Activated T-helper 2 cell treated with anti-CD3 and anti-CD28 coated beads, Interferon-gamma antibody, Interleukin-2, Interleukin-4, amounts not matched to agents 10 μg/mL and 5 μg/mL and 100 μg/mL, durations not matched to agents 14 hours and 24 hours and 36 hours (primary cell): ENCODE measurements at regions of chr20 and their contacts with region 1.

Region 1: DNA sequence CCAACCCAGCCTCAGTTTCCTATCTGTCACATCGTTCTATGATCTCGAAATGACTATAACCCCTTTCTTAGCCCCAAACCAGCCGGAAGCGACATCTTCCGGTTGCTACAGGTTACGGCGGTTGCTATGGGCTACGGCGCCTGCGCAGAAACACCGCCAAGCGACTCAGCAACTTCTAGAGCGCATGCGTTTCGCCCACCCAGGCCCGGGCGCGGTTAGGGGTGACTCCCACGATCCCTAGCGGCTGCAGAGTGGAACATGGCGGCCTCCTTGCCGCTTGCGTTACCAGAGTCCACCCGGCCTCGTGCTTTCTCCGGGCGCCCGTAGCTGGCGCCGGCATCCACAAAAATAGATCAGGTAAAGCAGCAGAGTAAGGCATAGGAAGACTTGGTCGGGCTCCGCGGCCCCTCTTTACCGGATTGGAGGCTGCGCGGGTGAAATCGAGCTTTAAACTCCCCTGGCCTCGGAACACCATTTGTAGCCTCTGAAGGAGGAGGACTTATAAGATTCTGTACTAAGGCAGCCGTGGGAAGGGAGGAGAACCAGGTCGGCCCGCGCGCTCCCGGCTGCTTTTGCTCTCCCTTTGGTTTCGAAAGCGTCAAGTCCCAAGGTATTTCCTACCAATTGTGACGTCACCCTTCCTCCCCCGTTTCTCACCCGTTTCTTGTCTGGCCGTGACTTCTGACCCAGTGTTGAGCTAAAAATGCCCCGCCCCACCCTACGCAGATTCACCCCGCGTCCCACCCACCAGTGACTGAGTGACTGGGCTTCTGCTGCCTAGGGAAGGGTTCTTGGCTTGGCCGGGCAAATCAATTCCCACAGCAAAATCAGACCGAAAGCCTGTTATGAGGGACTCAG is 3.5 kb downstream of the SDCBP2 start:
- DNase-seq: peak; percentile 98
- H3K4me3 Mint-ChIP-seq: no peak overlapping the region
- H3K27ac Mint-ChIP-seq: no peak overlapping the region
- H3K4me1 Mint-ChIP-seq: peaks cover 31% of the 10 kb centered on the region
- H3K27me3 Mint-ChIP-seq: no peaks in the 10 kb centered on the region

Region 2: GRCh38 chr20:391041-391711 is 934.2 kb before region 1 on chr20:
- intact Hi-C with region 1: no loop called
- DNase-seq: no peak
- H3K4me3 Mint-ChIP-seq: no peak overlapping the region
- H3K27ac Mint-ChIP-seq: no peak overlapping the region
- H3K4me1 Mint-ChIP-seq: no peaks in the 10 kb centered on the region
- H3K27me3 Mint-ChIP-seq: no peaks in the 10 kb centered on the region

Region 3: GRCh38 chr20:1345030-1345755 is 19.8 kb after region 1 on chr20:
- intact Hi-C with region 1: loop called (anchors 2 kb)
- DNase-seq: no peak
- H3K4me3 Mint-ChIP-seq: no peak overlapping the region
- H3K27ac Mint-ChIP-seq: no peak overlapping the region
- H3K4me1 Mint-ChIP-seq: peaks cover 33% of the 10 kb centered on the region
- H3K27me3 Mint-ChIP-seq: no peaks in the 10 kb centered on the region

Region 4: GRCh38 chr20:1377984-1378734 is 52.8 kb after region 1 on chr20:
- intact Hi-C with region 1: loop called (anchors 1 kb)
- DNase-seq: no peak
- H3K4me3 Mint-ChIP-seq: peak overlapping the region; percentile 27
- H3K27ac Mint-ChIP-seq: peak overlapping the region; percentile 78
- H3K4me1 Mint-ChIP-seq: peaks cover 84% of the 10 kb centered on the region
- H3K27me3 Mint-ChIP-seq: no peaks in the 10 kb centered on the region

Region 5: GRCh38 chr20:1437235-1437904 is 112.0 kb after region 1 on chr20:
- intact Hi-C with region 1: loop called (anchors 1 kb)
- DNase-seq: peak; percentile 69
- H3K4me3 Mint-ChIP-seq: no peak overlapping the region
- H3K27ac Mint-ChIP-seq: no peak overlapping the region
- H3K4me1 Mint-ChIP-seq: peaks cover 41% of the 10 kb centered on the region
- H3K27me3 Mint-ChIP-seq: peaks cover 4% of the 10 kb centered on the region

Region 6: DNA sequence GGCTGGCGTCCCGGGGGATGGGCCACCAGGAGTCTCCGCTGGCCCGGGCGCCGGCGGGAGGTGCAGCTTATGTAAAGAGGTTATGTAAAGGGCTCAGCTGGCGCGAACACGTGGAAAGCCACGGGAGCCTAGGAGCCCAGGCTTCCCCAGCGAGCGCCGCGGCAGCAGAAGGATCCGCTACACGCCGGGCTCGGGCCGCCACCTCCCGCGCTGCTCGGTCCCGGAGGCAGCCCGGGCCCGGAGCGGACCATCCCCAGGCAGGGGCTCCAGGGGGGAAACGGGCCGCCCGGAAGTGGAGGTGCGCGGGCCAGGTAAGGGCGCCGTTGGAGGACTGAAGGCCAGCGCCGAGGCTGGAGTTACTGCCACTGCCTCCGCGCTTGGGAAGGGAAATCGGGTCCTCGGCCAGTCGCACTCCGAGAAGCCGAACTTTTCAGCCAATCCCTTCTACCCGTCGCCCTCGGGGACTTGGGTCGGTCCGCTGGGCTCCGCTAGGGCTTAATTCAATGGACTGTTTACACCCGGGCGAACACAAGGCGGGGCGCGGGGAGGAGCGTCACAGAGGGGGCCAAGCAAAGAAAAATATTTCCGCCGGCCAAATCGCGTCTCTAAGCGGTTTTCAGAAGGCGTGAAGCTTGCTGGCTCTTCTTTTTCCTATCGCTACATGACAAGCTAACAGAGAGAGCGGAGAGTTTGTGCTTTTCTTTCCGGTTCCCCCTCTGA is 776.6 kb after region 1 on chr20:
- intact Hi-C with region 1: loop called (anchors 10 kb)
- DNase-seq: peak; percentile 84
- H3K4me3 Mint-ChIP-seq: peak overlapping the region; percentile 93
- H3K27ac Mint-ChIP-seq: peak overlapping the region; percentile 100
- H3K4me1 Mint-ChIP-seq: peaks cover 36% of the 10 kb centered on the region
- H3K27me3 Mint-ChIP-seq: peaks cover 1% of the 10 kb centered on the region